Activated B cell treated with CpG ODN at 0.5 μM for 24 hours (primary cell): ENCODE measurements at regions of chr14 and their contacts with region 1.

Region 1: DNA sequence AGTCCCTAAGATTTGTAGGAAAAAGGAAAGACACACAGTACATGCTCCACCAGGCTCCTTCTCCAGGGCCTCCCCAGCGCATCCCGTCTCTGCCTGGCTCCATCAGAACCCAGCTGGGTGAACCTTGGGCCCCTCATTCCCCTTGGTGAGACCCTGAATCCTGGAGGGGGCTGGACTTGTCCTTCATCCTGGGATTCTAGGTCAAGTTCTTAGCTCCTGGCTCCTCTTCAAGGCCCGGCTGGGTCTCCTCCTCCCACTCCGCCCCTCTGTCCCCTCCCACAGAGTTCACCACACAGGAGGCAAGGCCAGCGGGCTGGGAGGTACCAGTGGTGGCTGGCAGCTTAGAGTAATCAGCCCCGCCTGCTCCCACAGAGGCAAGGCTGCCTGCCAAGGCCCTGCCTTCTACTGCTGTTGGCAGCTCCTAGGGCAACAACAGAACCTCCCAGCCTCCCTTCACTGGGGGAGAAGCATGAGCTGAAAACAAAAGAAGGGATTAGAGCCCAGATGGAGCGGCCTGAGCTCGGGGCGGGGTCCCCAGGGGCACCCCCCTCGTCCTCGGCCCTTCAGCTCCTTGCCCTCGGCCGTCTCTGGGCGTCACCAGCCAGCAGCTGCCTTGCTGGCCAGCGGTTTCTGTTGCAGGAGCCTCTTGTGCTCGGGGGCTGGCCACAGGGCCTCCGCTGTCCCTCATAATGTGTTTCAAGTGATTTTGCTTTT is 49.4 kb downstream of the PSMA6 start:
- DNase-seq: no peak
- ATAC-seq: peak; percentile 51
- H3K4me3 Mint-ChIP-seq: no peak overlapping the region
- H3K27ac Mint-ChIP-seq: no peak overlapping the region
- H3K4me1 Mint-ChIP-seq: peaks cover 32% of the 10 kb centered on the region
- H3K27me3 Mint-ChIP-seq: no peaks in the 10 kb centered on the region
- CTCF ChIP-seq: no peak

Region 2: GRCh38 chr14:35292051-35292769 is 49.4 kb before region 1 on chr14 and contains the start of gene PSMA6:
- CTCF ChIA-PET with region 1: no interaction called
- POLR2A ChIA-PET with region 1: interaction called, 10 read pairs
- intact Hi-C with region 1: no loop called
- DNase-seq: peak; percentile 93
- ATAC-seq: peak; percentile 97
- H3K4me3 Mint-ChIP-seq: peak within 1 kb of the TSS; percentile 99
- H3K27ac Mint-ChIP-seq: peak within 1 kb of the TSS; percentile 96
- H3K4me1 Mint-ChIP-seq: peaks cover 61% of the 10 kb centered on the region
- H3K27me3 Mint-ChIP-seq: no peaks in the 10 kb centered on the region
- CTCF ChIP-seq: no peak
- total RNA-seq, gene PSMA6: 163 and 180 TPM in 2 replicates

Region 3: DNA sequence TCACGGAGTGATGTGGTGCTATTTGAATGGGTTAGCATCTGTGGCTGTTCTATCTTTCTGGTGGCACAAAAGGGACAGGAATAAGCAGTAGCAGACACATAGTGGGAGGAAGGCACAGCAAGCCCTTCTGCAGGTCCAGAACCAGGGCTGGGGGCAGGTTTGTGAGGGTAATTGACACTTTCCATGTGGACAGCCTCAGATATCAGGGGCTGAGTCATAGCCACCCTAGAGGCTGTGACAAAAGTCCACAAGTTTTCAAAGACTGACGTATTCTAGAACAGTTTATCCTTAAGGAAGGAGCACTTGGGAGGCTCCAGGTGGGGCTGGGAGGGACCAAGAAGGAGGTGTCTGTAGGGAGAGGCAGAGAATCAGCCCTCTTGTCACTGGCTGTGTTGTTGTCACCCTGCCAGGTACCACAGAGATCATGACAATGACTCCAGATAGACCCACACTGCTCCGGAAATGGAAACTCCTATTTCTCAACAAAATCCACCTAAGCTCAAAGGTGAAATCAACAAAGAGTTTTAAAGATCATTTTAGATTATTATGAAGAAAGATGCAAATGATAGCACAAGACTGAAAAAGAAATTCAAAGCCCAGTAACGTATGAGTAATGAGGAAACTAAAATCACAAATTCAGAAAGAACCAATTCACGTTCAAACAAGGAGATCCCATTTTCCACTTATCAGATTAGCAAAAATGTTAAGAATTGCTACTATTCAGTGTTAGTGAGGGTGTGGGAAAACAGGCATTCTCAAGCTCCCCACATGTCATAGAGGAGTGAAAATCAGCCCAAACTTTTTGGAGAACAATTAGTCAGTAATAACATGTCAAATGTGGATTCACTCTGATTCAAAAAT is 14.6 kb after region 1 on chr14:
- CTCF ChIA-PET with region 1: no interaction called
- POLR2A ChIA-PET with region 1: no interaction called
- intact Hi-C with region 1: no loop called
- DNase-seq: no peak
- ATAC-seq: no peak
- H3K4me3 Mint-ChIP-seq: no peak overlapping the region
- H3K27ac Mint-ChIP-seq: no peak overlapping the region
- H3K4me1 Mint-ChIP-seq: peaks cover 10% of the 10 kb centered on the region
- H3K27me3 Mint-ChIP-seq: peaks cover 3% of the 10 kb centered on the region
- CTCF ChIP-seq: no peak